CD8-positive, alpha-beta T cell (primary cell): ENCODE measurements at regions of chr6 and their contacts with region 1.

Region 1: DNA sequence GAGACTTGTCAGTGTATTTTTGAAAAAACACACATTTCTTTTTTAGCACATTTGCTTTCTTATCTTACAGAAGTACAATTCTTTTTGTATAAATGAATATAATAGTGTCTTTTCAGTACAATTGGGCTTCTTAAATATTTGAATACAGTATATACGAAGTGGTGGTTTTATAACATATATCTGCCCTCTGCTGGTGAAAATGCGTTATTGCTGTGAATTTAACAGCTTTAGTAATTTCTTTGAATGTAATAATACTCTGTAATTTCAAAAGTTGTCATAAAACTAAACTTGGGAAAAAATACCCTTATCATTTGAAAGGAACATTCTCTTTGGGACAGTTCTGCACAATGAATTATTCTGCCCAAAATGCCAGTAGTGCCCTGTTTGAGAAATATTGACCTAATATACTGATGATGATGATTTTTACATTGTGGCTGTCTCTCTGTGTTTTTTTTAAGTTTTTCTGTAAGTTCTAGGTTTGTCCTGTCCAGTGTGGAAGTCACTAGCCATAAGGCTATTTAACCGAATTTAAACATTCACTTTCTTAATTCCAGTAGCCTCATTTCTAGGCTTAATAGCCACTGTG is 19.0 kb downstream of the SMAP1 start:
- DNase-seq: peak in 3 of 9 experiments; percentile 19 to 64 (median 54)
- ATAC-seq: peak; percentile 57
- H3K4me3 ChIP-seq: no peak overlapping the region
- H3K4me3 Mint-ChIP-seq: no peak overlapping the region
- H3K27ac ChIP-seq: no peak overlapping the region
- H3K27ac Mint-ChIP-seq: no peak overlapping the region
- H3K4me1 ChIP-seq: peaks cover 8% of the 10 kb centered on the region
- H3K4me1 Mint-ChIP-seq: peaks cover 58% of the 10 kb centered on the region
- H3K27me3 ChIP-seq: no peaks in the 10 kb centered on the region
- H3K27me3 Mint-ChIP-seq: no peaks in the 10 kb centered on the region
- CTCF ChIP-seq: peak; percentile 87

Region 2: DNA sequence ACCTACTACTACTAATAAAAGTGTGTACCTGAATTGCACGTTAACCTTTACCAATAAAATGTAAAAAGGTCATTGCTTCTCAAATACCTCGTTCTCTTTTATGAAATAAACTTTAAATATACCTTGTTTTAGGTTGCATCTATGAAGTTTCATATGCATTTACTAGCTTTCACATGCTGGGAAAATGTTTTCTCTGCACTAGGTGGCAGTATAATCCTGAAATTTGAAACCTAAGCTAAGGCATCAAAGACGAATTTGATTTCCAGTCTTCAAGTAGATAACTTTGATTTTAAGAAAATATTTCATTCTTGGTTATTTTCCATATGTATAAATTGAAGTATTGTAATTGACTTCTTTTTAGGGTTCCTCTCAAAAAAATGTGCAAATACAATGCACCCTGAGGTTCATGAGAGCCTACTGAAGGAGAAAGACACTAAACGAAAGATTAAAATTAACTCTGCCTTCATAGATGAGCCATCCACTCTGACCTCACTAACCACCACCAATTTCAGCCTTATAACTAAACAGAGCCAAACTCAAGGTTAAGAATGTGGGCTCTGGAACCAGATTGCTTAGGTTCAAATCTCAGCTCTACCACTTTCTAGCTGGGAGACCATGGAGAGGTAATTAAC is 376.5 kb before region 1 on chr6:
- CTCF ChIA-PET with region 1: no interaction called
- POLR2A ChIA-PET with region 1: no interaction called
- intact Hi-C with region 1: loop called in 1 of 2 experiments (anchors 2 kb)
- DNase-seq: peak in 2 of 9 experiments; percentile 28 to 44
- ATAC-seq: no peak
- H3K4me3 ChIP-seq: no peak overlapping the region
- H3K4me3 Mint-ChIP-seq: no peak overlapping the region
- H3K27ac ChIP-seq: no peak overlapping the region
- H3K27ac Mint-ChIP-seq: no peak overlapping the region
- H3K4me1 ChIP-seq: no peaks in the 10 kb centered on the region
- H3K4me1 Mint-ChIP-seq: no peaks in the 10 kb centered on the region
- H3K27me3 ChIP-seq: no peaks in the 10 kb centered on the region
- H3K27me3 Mint-ChIP-seq: peaks cover 8% of the 10 kb centered on the region
- CTCF ChIP-seq: peak; percentile 49

Region 3: GRCh38 chr6:70413114-70413991 is 273.3 kb before region 1 on chr6 and contains the start of gene FAM135A:
- CTCF ChIA-PET with region 1: no interaction called
- POLR2A ChIA-PET with region 1: no interaction called
- intact Hi-C with region 1: loop called in 1 of 2 experiments (anchors 5 kb)
- DNase-seq: peak; percentile 85 to 96 (median 93)
- ATAC-seq: peak; percentile 96
- H3K4me3 ChIP-seq: peak within 1 kb of the TSS; percentile 65 to 72
- H3K4me3 Mint-ChIP-seq: peak within 1 kb of the TSS; percentile 91
- H3K27ac ChIP-seq: peak within 1 kb of the TSS; percentile 47 to 63
- H3K27ac Mint-ChIP-seq: peak within 1 kb of the TSS; percentile 91
- H3K4me1 ChIP-seq: peaks cover 8% of the 10 kb centered on the region
- H3K4me1 Mint-ChIP-seq: peaks cover 24% of the 10 kb centered on the region
- H3K27me3 ChIP-seq: no peaks in the 10 kb centered on the region
- H3K27me3 Mint-ChIP-seq: no peaks in the 10 kb centered on the region
- CTCF ChIP-seq: no peak
- total RNA-seq, gene FAM135A: 5.8 to 6.5 TPM

Region 4: GRCh38 chr6:70547313-70547712 is 139.3 kb before region 1 on chr6:
- CTCF ChIA-PET with region 1: interaction called, 21 read pairs
- POLR2A ChIA-PET with region 1: no interaction called
- intact Hi-C with region 1: loop called (anchors 1 kb)
- DNase-seq: peak in 2 of 9 experiments; percentile 19 to 34
- ATAC-seq: no peak
- H3K4me3 ChIP-seq: no peak overlapping the region
- H3K4me3 Mint-ChIP-seq: no peak overlapping the region
- H3K27ac ChIP-seq: no peak overlapping the region
- H3K27ac Mint-ChIP-seq: no peak overlapping the region
- H3K4me1 ChIP-seq: no peaks in the 10 kb centered on the region
- H3K4me1 Mint-ChIP-seq: no peaks in the 10 kb centered on the region
- H3K27me3 ChIP-seq: no peaks in the 10 kb centered on the region
- H3K27me3 Mint-ChIP-seq: no peaks in the 10 kb centered on the region
- CTCF ChIP-seq: no peak

Region 5: DNA sequence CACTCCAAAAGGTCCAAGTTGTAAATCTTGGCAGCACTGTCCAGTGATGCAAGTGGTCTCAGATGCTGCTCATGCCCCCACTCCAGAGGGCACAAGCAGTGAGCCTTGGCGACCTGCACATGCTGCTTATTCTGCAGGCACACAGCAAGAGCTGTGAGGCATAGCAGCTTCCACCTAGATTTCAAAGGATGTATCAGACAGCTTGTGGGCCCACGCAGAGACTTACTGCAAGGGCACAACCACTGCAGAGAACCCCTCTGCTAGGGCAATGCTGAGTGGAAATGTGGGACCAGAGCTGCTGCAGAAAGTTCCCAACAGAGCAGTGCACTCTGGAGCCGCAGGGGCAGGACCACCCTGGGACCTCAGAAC is 93.5 kb before region 1 on chr6:
- CTCF ChIA-PET with region 1: no interaction called
- POLR2A ChIA-PET with region 1: no interaction called
- intact Hi-C with region 1: no loop called
- DNase-seq: no peak
- ATAC-seq: no peak
- H3K4me3 ChIP-seq: no peak overlapping the region
- H3K4me3 Mint-ChIP-seq: no peak overlapping the region
- H3K27ac ChIP-seq: no peak overlapping the region
- H3K27ac Mint-ChIP-seq: no peak overlapping the region
- H3K4me1 ChIP-seq: no peaks in the 10 kb centered on the region
- H3K4me1 Mint-ChIP-seq: no peaks in the 10 kb centered on the region
- H3K27me3 ChIP-seq: no peaks in the 10 kb centered on the region
- H3K27me3 Mint-ChIP-seq: no peaks in the 10 kb centered on the region
- CTCF ChIP-seq: no peak

Region 6: DNA sequence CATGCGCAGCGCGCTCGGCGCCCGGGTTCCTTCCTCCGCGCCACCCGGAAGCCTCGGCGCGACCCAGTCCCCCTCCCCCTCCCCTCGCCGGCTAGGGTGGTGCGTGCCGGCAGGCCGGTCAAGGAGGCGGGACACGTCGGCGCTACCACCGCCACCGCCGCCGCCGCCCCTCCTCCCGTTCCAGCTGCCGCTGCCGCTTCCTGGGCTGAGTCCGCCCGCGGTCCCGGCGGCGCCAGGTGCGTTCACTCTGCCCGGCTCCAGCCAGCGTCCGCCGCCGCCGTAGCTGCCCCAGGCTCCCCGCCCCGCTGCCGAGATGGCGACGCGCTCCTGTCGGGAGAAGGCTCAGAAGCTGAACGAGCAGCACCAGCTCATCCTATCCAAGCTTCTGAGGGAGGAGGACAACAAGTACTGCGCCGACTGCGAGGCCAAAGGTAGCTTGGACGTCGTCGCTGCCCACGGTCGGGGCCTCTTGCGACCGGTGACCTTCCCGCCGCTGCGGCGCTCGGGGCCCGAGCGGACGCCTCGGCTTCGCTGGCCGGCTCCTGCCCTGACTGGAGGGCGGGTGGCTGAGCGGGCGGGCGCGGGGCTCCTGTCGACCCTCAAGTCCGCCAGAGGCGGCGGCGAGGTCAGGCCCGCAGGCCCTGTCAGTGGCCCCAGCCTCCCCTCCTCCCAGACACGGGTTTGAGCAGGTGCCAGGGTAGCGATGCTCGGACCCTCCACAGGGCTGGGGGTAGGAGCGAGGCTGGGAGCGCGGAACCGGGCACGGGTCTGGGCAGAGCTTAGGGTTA is 18.7 kb before region 1 on chr6 and contains the start of gene SMAP1:
- CTCF ChIA-PET with region 1: interaction called, 15 read pairs
- POLR2A ChIA-PET with region 1: no interaction called
- intact Hi-C with region 1: loop called in 1 of 2 experiments (anchors 2 kb)
- DNase-seq: peak; percentile 79 to 97 (median 93)
- ATAC-seq: peak; percentile 91
- H3K4me3 ChIP-seq: peak within 1 kb of the TSS; percentile 76 to 87
- H3K4me3 Mint-ChIP-seq: peak within 1 kb of the TSS; percentile 90
- H3K27ac ChIP-seq: peak within 1 kb of the TSS; percentile 53 to 75
- H3K27ac Mint-ChIP-seq: peak within 1 kb of the TSS; percentile 92
- H3K4me1 ChIP-seq: peaks cover 39% of the 10 kb centered on the region
- H3K4me1 Mint-ChIP-seq: peaks cover 53% of the 10 kb centered on the region
- H3K27me3 ChIP-seq: no peaks in the 10 kb centered on the region
- H3K27me3 Mint-ChIP-seq: no peaks in the 10 kb centered on the region
- CTCF ChIP-seq: no peak
- total RNA-seq, gene SMAP1: 21.2 to 21.8 TPM